HCT116 (cell line): ENCODE measurements at regions of chr2 and their contacts with region 1.

Region 1: DNA sequence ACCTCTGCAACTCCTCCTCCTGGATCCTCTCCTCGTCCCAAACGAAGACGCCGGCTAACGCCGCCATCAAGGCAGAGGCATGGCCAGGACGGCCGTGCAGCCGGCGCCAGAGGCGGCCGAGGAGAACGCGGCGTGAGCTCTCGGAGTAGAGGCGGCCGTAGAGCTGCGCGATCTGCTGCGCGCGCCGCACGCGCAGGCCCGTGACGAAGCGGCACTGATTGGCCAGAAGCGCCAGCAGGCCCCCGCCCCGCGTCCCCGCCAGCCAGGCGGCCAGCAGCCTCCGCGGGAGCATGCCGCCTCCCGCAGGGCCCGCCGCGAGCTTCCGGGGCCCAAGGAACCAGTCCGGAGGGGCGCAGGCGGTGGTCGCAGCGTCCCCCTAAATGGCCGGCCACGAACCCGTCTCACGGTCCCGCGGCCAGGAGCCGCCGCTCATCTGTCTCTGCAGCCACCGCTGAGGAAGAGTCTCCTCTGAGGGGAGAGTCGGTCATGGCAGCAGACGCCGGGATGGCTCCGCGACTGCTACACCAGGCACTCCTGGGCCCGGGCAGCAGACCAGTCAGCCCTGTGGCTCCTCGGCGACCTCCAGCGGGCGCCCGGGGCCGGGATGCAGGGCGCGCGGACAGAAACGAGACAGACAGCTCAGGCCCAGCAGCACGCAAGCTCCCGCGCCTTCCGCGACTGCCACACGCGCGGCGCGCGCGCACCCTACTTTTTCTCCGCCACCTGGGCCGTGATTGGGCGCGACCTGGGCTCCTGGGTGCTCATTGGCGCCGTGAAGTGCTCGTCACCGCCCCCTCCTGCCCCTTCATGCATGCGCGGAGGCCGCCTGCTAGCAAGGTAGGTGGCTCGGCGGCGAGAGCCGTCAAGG is at the start of gene STARD7:
- DNase-seq: peak; percentile 97
- ATAC-seq: peak; percentile 92
- H3K4me3 ChIP-seq: peak within 1 kb of the TSS; percentile 78 to 97
- H3K27ac ChIP-seq: peak within 1 kb of the TSS; percentile 99
- H3K4me1 ChIP-seq: peaks cover 14 to 30% of the 10 kb centered on the region in 2 experiments
- H3K27me3 ChIP-seq: no peaks in the 10 kb centered on the region
- CTCF ChIP-seq: no peak
- POLR2A ChIP-seq: peak; percentile 81
- RAD21 ChIP-seq: no peak
- total RNA-seq, gene STARD7: 160 TPM

Region 2: GRCh38 chr2:96260404-96261260 is 52.3 kb after region 1 on chr2:
- CTCF ChIA-PET with region 1: interaction called, 12 read pairs
- POLR2A ChIA-PET with region 1: interaction called, 9 read pairs
- RAD21 ChIA-PET with region 1: interaction called in 1 of 2 experiments, 3 read pairs
- intact Hi-C with region 1: loop called (anchors 2 kb)
- DNase-seq: peak; percentile 82
- ATAC-seq: peak; percentile 90
- H3K4me3 ChIP-seq: peak overlapping the region; percentile 21 to 26
- H3K27ac ChIP-seq: peak overlapping the region; percentile 63
- H3K4me1 ChIP-seq: peaks cover 33 to 49% of the 10 kb centered on the region in 2 experiments
- H3K27me3 ChIP-seq: no peaks in the 10 kb centered on the region
- CTCF ChIP-seq: peak; percentile 65 to 68 (median 65); a peak in 5 of 6 replicates
- POLR2A ChIP-seq: no peak
- RAD21 ChIP-seq: peak; percentile 58

Region 3: DNA sequence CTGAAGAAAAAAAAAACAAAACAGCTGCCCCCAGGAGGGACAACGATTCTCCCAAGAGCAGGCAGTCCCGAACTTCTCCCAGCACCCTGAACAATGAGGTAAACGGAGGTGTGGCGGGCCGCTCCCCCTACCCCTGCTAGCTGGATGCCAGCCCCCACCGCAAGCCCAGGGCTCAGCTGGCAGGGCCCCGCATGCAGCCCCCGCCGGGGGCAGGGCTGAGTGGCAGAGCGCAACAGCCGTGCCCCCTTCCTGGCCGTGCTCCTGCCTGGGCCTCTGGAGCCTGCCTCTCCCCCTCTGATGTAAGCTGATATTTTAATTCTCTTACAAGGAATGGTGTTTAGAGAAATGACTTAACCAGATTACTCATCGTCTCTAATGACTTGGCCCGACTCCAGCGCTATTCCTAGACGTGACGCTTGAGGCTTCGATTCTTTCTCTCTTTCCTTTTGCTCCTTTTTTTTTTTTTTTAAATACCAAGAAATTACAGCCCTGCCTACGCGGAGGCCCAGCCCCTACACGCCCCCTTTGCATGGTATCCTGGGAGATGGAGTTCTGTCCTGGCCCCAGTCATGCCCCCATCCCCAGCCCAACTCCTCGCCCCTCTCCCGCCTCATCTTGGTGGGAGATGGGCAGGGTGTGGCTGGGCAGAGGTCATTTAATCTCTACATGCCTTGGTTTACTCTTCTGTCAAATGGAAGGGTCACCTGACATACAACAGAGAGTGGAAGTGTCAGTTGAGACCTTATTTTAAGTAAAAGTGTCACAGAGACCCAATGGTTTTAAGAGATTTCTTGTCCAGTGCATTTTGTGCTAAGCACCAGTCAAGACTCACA is 323.7 kb after region 1 on chr2:
- CTCF ChIA-PET with region 1: no interaction called
- POLR2A ChIA-PET with region 1: no interaction called
- RAD21 ChIA-PET with region 1: no interaction called
- intact Hi-C with region 1: no loop called
- DNase-seq: peak; percentile 95
- ATAC-seq: peak; percentile 63
- H3K4me3 ChIP-seq: peak overlapping the region; percentile 39 to 57
- H3K27ac ChIP-seq: peak overlapping the region; percentile 43; the same call in 1 of the 2 replicates
- H3K4me1 ChIP-seq: peaks cover 12 to 35% of the 10 kb centered on the region in 2 experiments
- H3K27me3 ChIP-seq: no peaks in the 10 kb centered on the region
- CTCF ChIP-seq: no peak
- POLR2A ChIP-seq: no peak
- RAD21 ChIP-seq: no peak